PC-9 (cell line): ENCODE measurements at regions of chr14 and their contacts with region 1.

Region 1: GRCh38 chr14:60561845-60562746 is 53.1 kb downstream of the SIX6 start:
- DNase-seq: peak; percentile 36 to 59
- H3K4me3 ChIP-seq: no peak overlapping the region
- H3K27ac ChIP-seq: no peak overlapping the region
- H3K4me1 ChIP-seq: no peaks in the 10 kb centered on the region
- H3K27me3 ChIP-seq: no peaks in the 10 kb centered on the region
- CTCF ChIP-seq: peak; percentile 79

Region 2: DNA sequence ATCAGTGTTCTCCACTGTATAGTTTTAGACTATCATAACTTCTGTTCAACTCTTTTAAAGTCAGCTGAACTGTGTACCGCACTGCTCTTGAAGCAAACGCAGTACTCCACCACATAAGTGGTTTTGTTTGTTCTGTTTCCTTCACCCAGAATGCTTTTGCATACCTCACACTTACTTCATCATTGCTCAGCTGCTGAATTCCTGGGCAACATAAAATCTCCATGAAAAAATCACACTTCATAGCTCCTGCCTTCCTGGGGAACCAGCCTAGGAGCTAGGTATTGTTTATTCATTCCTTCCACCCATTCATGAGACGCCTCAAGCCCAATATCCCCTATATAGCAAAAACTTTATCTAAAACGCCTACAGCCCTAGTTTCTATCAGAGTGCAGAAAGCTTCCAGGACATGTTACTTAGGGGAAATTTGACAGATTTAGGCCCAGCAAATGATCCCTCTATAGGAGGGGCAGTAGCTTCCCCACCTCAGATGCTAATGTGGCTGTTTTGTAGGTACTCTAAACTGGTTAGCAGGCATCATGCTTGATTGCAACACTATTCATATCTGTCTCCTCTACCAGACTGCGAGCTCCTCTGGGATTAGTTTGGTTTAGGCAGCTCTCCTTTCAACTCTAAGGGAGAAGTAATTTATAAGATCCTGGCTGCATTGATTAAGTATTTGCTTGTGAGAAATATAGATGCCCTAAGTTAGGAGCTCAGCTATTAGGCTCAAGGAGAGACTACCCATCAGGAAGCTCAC is 597.7 kb before region 1 on chr14:
- CTCF ChIA-PET with region 1: no interaction called
- POLR2A ChIA-PET with region 1: no interaction called
- intact Hi-C with region 1: loop called (anchors 1 kb)
- DNase-seq: no peak
- H3K4me3 ChIP-seq: no peak overlapping the region
- H3K27ac ChIP-seq: no peak overlapping the region
- H3K4me1 ChIP-seq: no peaks in the 10 kb centered on the region
- H3K27me3 ChIP-seq: no peaks in the 10 kb centered on the region
- CTCF ChIP-seq: no peak

Region 3: DNA sequence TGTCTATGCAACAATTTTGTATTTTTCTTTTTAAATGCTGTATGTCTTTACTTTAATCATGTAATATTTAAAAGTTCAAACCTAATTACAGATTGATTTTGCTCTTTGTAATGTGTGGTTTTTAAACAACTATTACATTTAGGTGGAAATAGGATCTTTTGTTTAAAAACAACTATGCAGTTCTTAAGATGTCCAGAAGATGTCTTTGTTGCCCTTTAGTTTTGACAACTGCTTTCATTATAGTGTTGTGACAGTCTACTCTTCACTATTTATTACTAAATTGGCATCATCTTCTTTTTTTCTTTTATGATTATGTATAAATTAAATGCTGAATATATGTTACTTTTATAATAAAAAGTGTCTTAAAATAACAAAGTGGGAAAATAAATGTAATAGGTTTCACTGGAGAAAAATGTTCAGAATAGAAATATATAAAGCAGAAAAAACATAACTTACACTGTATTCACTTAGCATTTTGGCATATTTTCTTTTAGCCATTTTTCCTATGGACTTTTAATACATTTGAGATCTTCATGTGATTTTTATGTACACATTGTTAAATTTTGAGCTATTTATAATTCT is 497.5 kb before region 1 on chr14:
- CTCF ChIA-PET with region 1: interaction called, 3 read pairs
- POLR2A ChIA-PET with region 1: no interaction called
- intact Hi-C with region 1: loop called (anchors 5 kb)
- DNase-seq: no peak
- H3K4me3 ChIP-seq: no peak overlapping the region
- H3K27ac ChIP-seq: no peak overlapping the region
- H3K4me1 ChIP-seq: peaks cover 18% of the 10 kb centered on the region
- H3K27me3 ChIP-seq: no peaks in the 10 kb centered on the region
- CTCF ChIP-seq: peak; percentile 75

Region 4: DNA sequence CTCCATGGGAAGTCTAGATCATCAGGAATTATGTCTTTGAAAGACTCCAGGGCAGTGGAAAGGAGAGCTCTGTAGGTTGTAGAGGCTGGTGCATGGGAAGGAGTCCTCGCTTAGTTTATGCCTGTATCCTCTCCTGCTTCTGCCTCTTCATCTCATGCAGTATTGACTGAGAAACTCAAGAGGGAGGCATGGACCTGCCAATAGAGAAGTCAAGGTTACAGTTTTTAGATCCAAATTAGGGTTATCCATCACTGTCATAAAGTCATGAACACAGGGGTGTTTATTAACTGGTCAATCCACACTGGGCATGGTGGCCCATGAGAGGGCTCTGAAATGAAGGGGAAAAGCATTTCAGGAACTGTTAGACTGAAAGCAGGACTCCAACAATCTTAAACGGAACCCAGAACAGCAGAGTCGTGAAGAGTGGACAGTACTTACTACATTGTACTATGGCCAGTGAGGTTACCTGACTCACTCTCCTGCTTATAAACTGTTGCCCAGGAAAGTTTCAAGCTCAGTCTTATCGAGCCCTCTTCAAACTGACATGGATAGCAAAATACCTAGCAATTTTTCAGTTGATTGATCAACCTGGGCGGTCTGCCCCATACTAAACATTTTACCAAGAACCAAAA is 366.8 kb before region 1 on chr14:
- CTCF ChIA-PET with region 1: no interaction called
- POLR2A ChIA-PET with region 1: no interaction called
- intact Hi-C with region 1: loop called (anchors 1 kb)
- DNase-seq: no peak
- H3K4me3 ChIP-seq: no peak overlapping the region
- H3K27ac ChIP-seq: no peak overlapping the region
- H3K4me1 ChIP-seq: peaks cover 14% of the 10 kb centered on the region
- H3K27me3 ChIP-seq: no peaks in the 10 kb centered on the region
- CTCF ChIP-seq: no peak

Region 5: GRCh38 chr14:60266021-60266937 is 295.8 kb before region 1 on chr14:
- CTCF ChIA-PET with region 1: interaction called, 3 read pairs
- POLR2A ChIA-PET with region 1: no interaction called
- intact Hi-C with region 1: loop called (anchors 5 kb)
- DNase-seq: no peak
- H3K4me3 ChIP-seq: no peak overlapping the region
- H3K27ac ChIP-seq: no peak overlapping the region
- H3K4me1 ChIP-seq: no peaks in the 10 kb centered on the region
- H3K27me3 ChIP-seq: no peaks in the 10 kb centered on the region
- CTCF ChIP-seq: peak; percentile 77

Region 6: GRCh38 chr14:60331201-60332045 is 230.7 kb before region 1 on chr14:
- CTCF ChIA-PET with region 1: interaction called, 3 read pairs
- POLR2A ChIA-PET with region 1: no interaction called
- intact Hi-C with region 1: loop called (anchors 5 kb)
- DNase-seq: peak in 1 of 2 experiments; percentile 66
- H3K4me3 ChIP-seq: peak overlapping the region; percentile 66
- H3K27ac ChIP-seq: no peak overlapping the region
- H3K4me1 ChIP-seq: no peaks in the 10 kb centered on the region
- H3K27me3 ChIP-seq: no peaks in the 10 kb centered on the region
- CTCF ChIP-seq: peak; percentile 98

Region 7: GRCh38 chr14:60349663-60350365 is 212.3 kb before region 1 on chr14:
- CTCF ChIA-PET with region 1: no interaction called
- POLR2A ChIA-PET with region 1: no interaction called
- intact Hi-C with region 1: loop called (anchors 1 kb)
- DNase-seq: peak in 1 of 2 experiments; percentile 29
- H3K4me3 ChIP-seq: no peak overlapping the region
- H3K27ac ChIP-seq: no peak overlapping the region
- H3K4me1 ChIP-seq: no peaks in the 10 kb centered on the region
- H3K27me3 ChIP-seq: no peaks in the 10 kb centered on the region
- CTCF ChIP-seq: peak; percentile 87